ENCODE measurements at regions of chr2 and their contacts with region 1.

Region 1: GRCh38 chr2:60550178-60550983 is 3.1 kb downstream of the BCL11A start:
- DNase-seq: peak; percentile 78
- H3K4me3 ChIP-seq: peak overlapping the region; percentile 57
- H3K27ac ChIP-seq: peak overlapping the region; percentile 29
- H3K4me1 ChIP-seq: peaks cover 27% of the 10 kb centered on the region
- H3K27me3 ChIP-seq: peaks cover 98% of the 10 kb centered on the region
- CTCF ChIP-seq: peak; percentile 75

Region 2: GRCh38 chr2:58762176-58762781 is 1788.1 kb before region 1 on chr2:
- CTCF ChIA-PET with region 1: no interaction called
- POLR2A ChIA-PET with region 1: no interaction called
- intact Hi-C with region 1: loop called (anchors 10 kb)
- DNase-seq: peak; percentile 77
- H3K4me3 ChIP-seq: no peak overlapping the region
- H3K27ac ChIP-seq: no peak overlapping the region
- H3K4me1 ChIP-seq: no peaks in the 10 kb centered on the region
- H3K27me3 ChIP-seq: no peaks in the 10 kb centered on the region
- CTCF ChIP-seq: peak; percentile 71

Region 3: GRCh38 chr2:59025157-59025757 is 1525.1 kb before region 1 on chr2:
- CTCF ChIA-PET with region 1: interaction called, 8 read pairs
- POLR2A ChIA-PET with region 1: no interaction called
- intact Hi-C with region 1: loop called (anchors 10 kb)
- DNase-seq: peak; percentile 58
- H3K4me3 ChIP-seq: no peak overlapping the region
- H3K27ac ChIP-seq: no peak overlapping the region
- H3K4me1 ChIP-seq: no peaks in the 10 kb centered on the region
- H3K27me3 ChIP-seq: no peaks in the 10 kb centered on the region
- CTCF ChIP-seq: peak; percentile 93

Region 4: DNA sequence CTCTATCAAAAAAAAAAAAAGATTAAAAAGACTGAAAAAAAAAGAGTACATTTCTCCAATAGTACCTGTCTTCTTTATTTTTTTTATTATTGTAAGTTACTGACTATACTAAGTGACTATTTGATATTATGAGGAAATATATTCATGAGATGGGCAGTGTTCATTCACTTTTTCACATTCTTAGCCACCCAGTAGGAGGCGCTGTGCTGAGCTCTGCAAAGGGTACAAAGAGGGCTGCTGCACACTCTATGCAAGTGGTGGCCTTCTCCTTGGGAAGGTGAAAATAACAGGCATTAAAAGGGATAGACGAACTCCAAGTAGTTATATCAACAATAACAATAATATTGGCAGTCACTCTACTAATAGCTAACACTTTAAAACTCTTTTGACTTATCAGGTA is 1274.3 kb before region 1 on chr2:
- CTCF ChIA-PET with region 1: interaction called, 13 read pairs
- POLR2A ChIA-PET with region 1: no interaction called
- intact Hi-C with region 1: no loop called
- DNase-seq: peak; percentile 11
- H3K4me3 ChIP-seq: no peak overlapping the region
- H3K27ac ChIP-seq: no peak overlapping the region
- H3K4me1 ChIP-seq: no peaks in the 10 kb centered on the region
- H3K27me3 ChIP-seq: peaks cover 4% of the 10 kb centered on the region
- CTCF ChIP-seq: peak; percentile 54

Region 5: GRCh38 chr2:59301466-59302402 is 1248.6 kb before region 1 on chr2:
- CTCF ChIA-PET with region 1: no interaction called
- POLR2A ChIA-PET with region 1: no interaction called
- intact Hi-C with region 1: loop called (anchors 5 kb)
- DNase-seq: peak; percentile 86
- H3K4me3 ChIP-seq: no peak overlapping the region
- H3K27ac ChIP-seq: no peak overlapping the region
- H3K4me1 ChIP-seq: no peaks in the 10 kb centered on the region
- H3K27me3 ChIP-seq: no peaks in the 10 kb centered on the region
- CTCF ChIP-seq: peak; percentile 66

Region 6: DNA sequence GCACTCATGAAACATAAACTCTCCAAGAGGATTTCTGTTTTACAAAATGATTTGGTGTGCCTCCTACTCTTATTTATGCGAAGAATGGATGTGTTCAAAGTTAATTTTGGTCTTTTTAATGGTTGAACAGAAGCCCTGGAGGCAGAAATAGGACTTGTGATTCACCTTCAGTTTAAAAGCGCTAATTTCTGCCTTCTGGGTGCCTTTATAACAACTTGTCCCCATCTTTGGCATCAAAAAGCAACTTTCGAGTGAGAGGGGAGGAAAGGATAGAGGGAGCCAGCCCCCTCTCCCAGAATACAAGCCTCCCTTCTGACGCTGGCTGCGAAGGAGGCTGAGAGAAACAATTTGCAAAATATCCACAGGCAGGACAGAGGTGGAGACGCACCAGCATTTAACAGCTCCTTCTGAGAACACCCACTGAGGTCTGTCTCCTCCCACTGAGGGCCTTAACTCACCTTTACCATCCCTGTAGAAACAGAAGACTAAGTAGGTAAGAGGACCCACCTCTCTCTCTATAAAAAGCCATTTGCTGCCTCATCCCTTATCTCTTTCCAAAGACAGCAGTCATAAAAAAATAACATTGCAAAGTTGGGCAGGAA is 27.4 kb after region 1 on chr2:
- CTCF ChIA-PET with region 1: no interaction called
- POLR2A ChIA-PET with region 1: no interaction called
- intact Hi-C with region 1: no loop called
- DNase-seq: no peak
- H3K4me3 ChIP-seq: no peak overlapping the region
- H3K27ac ChIP-seq: no peak overlapping the region
- H3K4me1 ChIP-seq: peaks cover 8% of the 10 kb centered on the region
- H3K27me3 ChIP-seq: peaks cover 43% of the 10 kb centered on the region
- CTCF ChIP-seq: no peak